B cell (primary cell): ENCODE measurements at regions of chr10 and their contacts with region 1.

Region 1: DNA sequence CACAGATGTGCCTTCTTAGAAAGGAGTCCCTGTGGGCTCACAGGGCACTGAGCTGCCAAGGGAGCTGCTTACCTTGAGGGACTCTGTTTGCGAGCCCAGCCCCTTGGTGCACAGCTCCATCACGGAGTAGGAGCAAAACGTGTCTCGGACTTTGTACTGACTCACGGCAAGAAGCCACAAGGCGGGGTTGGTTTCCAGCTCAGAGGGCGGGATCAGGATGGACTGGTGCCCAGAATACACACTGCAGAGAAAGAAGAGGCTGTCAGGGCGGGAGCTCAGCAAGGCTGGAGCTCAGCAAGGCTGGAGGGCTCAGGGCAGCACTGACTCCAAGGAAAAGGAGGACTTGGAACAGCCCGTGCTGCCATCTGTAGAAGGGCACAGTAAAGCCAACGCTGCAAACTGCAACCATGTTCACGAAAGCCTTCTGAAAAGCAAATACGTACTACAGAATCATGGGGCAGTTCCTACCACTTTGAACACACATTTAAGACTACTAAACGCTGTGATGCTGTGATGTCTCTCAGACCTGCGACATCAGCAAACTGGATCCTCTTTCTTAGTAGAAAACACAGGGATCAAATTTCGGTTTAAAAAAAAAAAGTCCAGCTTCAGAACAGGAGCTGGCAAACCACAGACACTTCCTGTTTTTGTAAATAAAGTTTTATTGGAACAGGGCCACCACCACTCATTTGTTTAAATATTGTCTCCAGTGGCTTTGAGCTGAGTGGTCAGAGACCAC is 194.3 kb downstream of the ZMYND11 start:
- DNase-seq: no peak
- ATAC-seq: no peak
- H3K4me3 ChIP-seq: no peak overlapping the region
- H3K4me3 Mint-ChIP-seq: peak overlapping the region; percentile 49
- H3K27ac ChIP-seq: no peak overlapping the region
- H3K27ac Mint-ChIP-seq: peak overlapping the region; percentile 29
- H3K4me1 ChIP-seq: peaks cover 29 to 45% of the 10 kb centered on the region in 2 donors
- H3K4me1 Mint-ChIP-seq: peaks cover 49% of the 10 kb centered on the region
- H3K27me3 ChIP-seq: no peaks in the 10 kb centered on the region
- H3K27me3 Mint-ChIP-seq: peaks cover 6% of the 10 kb centered on the region
- CTCF ChIP-seq: no peak

Region 2: GRCh38 chr10:297567-297966 is 32.0 kb before region 1 on chr10:
- CTCF ChIA-PET with region 1: interaction called, 4 read pairs
- POLR2A ChIA-PET with region 1: no interaction called
- intact Hi-C with region 1: loop called (anchors 5 kb)
- DNase-seq: no peak
- ATAC-seq: no peak
- H3K4me3 ChIP-seq: no peak overlapping the region
- H3K4me3 Mint-ChIP-seq: no peak overlapping the region
- H3K27ac ChIP-seq: no peak overlapping the region
- H3K27ac Mint-ChIP-seq: no peak overlapping the region
- H3K4me1 ChIP-seq: peaks cover 29 to 42% of the 10 kb centered on the region in 2 donors
- H3K4me1 Mint-ChIP-seq: peaks cover 52% of the 10 kb centered on the region
- H3K27me3 ChIP-seq: no peaks in the 10 kb centered on the region
- H3K27me3 Mint-ChIP-seq: peaks cover 3% of the 10 kb centered on the region
- CTCF ChIP-seq: no peak

Region 3: DNA sequence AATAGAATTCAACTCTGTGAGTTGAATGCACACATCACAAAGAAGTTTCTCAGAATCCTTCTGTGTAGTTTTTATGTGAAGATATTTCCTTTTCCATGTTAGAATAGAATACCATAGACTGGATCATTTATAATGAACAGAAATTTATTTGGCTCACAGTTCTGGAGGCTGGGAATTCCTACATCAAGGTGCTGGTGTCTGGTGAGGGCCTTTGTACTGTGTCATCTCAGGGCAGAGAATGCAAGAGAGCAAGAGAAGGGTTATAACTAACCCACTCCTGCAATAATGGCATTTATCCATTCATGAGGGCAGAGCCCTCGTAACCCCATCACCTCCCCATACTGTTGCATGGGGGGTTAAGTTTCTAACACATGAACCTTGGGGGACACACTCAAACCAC is 378.3 kb after region 1 on chr10:
- CTCF ChIA-PET with region 1: no interaction called
- POLR2A ChIA-PET with region 1: no interaction called
- intact Hi-C with region 1: no loop called
- DNase-seq: no peak
- ATAC-seq: no peak
- H3K4me3 ChIP-seq: no peak overlapping the region
- H3K4me3 Mint-ChIP-seq: no peak overlapping the region
- H3K27ac ChIP-seq: no peak overlapping the region
- H3K27ac Mint-ChIP-seq: no peak overlapping the region
- H3K4me1 ChIP-seq: no peaks in the 10 kb centered on the region
- H3K4me1 Mint-ChIP-seq: no peaks in the 10 kb centered on the region
- H3K27me3 ChIP-seq: peaks cover 0 to 6% (median 0%) of the 10 kb centered on the region in 4 experiments
- H3K27me3 Mint-ChIP-seq: peaks cover 28% of the 10 kb centered on the region
- CTCF ChIP-seq: no peak